ENCODE measurements at regions of chr14 and their contacts with region 1.

Region 1: GRCh38 chr14:63833728-63834127 is 19.1 kb upstream of the SYNE2 start:
- DNase-seq: no peak
- ATAC-seq: no peak

Region 2: DNA sequence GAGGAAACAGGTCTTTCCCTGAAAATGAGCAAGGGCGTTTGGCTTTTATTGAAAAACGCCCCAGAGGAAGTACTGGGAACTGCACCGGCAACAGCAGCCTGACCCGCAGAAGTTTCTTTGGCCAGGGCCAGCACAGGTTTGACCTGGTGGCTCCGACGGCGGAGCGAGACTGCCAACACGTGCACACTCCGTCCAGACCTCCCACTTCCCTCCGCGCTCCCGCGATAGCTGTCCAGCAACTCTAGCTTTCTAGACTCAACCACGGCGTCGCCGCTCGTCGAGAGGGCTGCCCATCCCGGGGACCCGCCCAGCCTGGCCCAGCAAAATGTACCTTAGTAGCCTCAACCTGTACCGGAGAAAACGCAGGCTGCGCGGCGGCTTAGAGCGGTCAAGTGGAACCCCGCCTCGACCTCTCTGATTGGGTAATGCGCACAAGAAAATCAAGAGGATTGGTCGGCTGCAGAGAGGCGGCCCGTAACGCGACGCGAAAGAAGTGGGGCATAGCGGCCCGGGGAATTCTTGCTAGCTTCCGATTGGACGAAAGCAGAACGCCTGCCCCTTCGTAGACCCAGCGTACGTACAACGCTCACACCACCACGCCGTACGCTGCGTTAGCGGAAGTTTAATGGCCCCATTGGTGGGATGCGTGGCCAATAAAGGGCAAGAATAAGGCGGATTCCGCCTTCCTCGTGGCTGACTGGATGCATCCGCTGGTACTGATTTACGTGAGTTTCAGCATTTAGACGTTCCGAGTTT is 192.1 kb before region 1 on chr14 and contains the start of gene WDR89:
- intact Hi-C with region 1: no loop called
- DNase-seq: peak; percentile 97
- ATAC-seq: peak; percentile 97
- total RNA-seq, gene WDR89: 5.0 TPM

Region 3: DNA sequence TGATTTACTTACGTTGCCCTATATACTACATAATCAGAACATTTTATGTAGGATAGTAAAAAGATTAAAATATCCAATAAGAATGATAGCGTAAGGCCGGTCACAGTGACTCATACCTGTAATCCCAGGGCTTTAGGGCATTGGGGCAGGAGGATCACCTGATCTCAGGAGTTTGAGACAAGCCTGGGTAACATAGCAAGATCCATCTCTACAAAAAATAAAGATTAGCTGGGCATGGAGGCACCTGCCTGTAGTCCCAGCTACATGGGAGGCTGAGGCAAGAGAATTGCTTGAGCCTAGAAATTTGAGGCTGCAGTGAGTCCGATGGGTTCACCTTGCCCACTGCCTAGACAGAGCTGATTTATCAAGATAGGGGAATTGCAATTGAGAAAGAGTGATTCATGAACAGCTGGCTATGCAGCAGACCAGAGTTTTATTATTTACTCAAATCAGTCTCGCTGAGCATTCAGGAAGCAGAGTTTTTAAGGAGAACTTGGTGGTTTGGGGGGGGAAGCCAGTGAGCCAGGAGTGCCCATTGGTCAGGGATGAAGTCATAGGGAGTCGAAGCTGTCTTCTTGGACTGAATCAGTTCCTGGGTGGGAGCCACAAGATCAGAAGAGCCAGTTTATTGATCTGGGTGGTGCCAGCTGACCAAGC is 81.1 kb before region 1 on chr14:
- intact Hi-C with region 1: no loop called
- DNase-seq: no peak
- ATAC-seq: no peak

Region 4: GRCh38 chr14:63972323-63972932 is 138.7 kb after region 1 on chr14:
- intact Hi-C with region 1: loop called (anchors 10 kb)
- DNase-seq: no peak
- ATAC-seq: no peak

Measured in Right ventricle myocardium superior (tissue), 1 donor.